ENCODE measurements at regions of chr4 and their contacts with region 1.

Region 1: DNA sequence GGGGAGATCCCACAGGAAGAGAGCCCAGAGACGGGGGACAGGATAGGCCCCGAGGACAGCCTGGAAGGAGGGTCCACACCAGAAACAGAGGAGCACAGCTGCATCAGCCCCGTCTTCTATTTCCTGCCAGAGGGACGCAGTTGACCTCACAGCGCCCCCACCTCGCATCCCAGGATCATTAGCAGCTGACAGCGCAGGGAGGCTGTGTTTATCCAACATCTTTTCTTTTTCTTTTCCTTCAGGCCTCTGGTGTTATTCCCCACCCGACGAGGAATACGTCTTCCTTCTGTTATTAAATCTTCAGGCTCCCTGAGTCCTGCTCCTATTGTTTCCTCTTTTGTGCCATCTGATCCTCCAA is 75.4 kb downstream of the DCHS2 start:
- DNase-seq: no peak
- ATAC-seq: peak; percentile 17

Region 2: DNA sequence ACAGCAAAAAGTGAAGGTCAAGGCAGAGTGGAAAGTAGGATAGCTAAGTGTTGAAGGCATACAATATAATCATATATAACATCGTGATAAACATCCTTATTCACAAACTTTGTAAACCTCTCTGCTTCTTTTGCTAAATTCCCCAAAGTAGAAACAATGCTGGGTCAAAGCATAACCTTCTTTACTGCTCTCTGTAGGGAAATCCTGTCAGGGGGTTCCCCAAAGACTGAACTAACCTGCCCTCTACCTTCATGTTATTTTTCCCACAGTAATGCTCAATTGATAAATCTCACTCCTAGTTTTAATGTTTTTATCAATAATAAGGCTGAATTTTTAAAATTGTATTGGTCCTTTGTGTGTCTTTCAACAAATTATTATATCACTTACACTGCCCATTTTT is 19.7 kb after region 1 on chr4:
- intact Hi-C with region 1: loop called (anchors 1 kb)
- DNase-seq: no peak
- ATAC-seq: no peak